ENCODE measurements at regions of chr3 and their contacts with region 1.

Region 1: GRCh38 chr3:160941885-160942494 is 163.2 kb downstream of the B3GALNT1 start:
- DNase-seq: peak; percentile 76
- H3K4me3 ChIP-seq: no peak overlapping the region
- H3K27ac ChIP-seq: no peak overlapping the region
- H3K4me1 ChIP-seq: peaks cover 0 to 3% (median 0%) of the 10 kb centered on the region in 4 donors
- H3K27me3 ChIP-seq: no peaks in the 10 kb centered on the region
- CTCF ChIP-seq: peak; percentile 82 to 93 (median 87)
- EP300 ChIP-seq: no peak
- POLR2A ChIP-seq: no peak

Region 2: GRCh38 chr3:160577556-160578195 is 364.3 kb before region 1 on chr3:
- in situ Hi-C with region 1: loop called in 1 of 4 experiments (anchors 25 kb)
- intact Hi-C with region 1: no loop called
- DNase-seq: no peak
- H3K4me3 ChIP-seq: no peak overlapping the region
- H3K27ac ChIP-seq: no peak overlapping the region
- H3K4me1 ChIP-seq: no peaks in the 10 kb centered on the region
- H3K27me3 ChIP-seq: no peaks in the 10 kb centered on the region
- CTCF ChIP-seq: no peak
- EP300 ChIP-seq: no peak
- POLR2A ChIP-seq: no peak

Region 3: GRCh38 chr3:160612386-160613075 is 329.5 kb before region 1 on chr3:
- in situ Hi-C with region 1: no loop called
- intact Hi-C with region 1: no loop called
- DNase-seq: no peak
- H3K4me3 ChIP-seq: no peak overlapping the region
- H3K27ac ChIP-seq: no peak overlapping the region
- H3K4me1 ChIP-seq: no peaks in the 10 kb centered on the region
- H3K27me3 ChIP-seq: no peaks in the 10 kb centered on the region
- CTCF ChIP-seq: no peak
- EP300 ChIP-seq: no peak
- POLR2A ChIP-seq: no peak

Region 4: GRCh38 chr3:160707187-160707794 is 234.7 kb before region 1 on chr3:
- in situ Hi-C with region 1: loop called (anchors 5 to 10 kb)
- intact Hi-C with region 1: loop called (anchors 5 kb)
- DNase-seq: peak; percentile 20
- H3K4me3 ChIP-seq: no peak overlapping the region
- H3K27ac ChIP-seq: no peak overlapping the region
- H3K4me1 ChIP-seq: no peaks in the 10 kb centered on the region
- H3K27me3 ChIP-seq: peaks cover 7% of the 10 kb centered on the region
- CTCF ChIP-seq: peak; percentile 49 to 62 (median 56)
- EP300 ChIP-seq: no peak
- POLR2A ChIP-seq: no peak

Region 5: DNA sequence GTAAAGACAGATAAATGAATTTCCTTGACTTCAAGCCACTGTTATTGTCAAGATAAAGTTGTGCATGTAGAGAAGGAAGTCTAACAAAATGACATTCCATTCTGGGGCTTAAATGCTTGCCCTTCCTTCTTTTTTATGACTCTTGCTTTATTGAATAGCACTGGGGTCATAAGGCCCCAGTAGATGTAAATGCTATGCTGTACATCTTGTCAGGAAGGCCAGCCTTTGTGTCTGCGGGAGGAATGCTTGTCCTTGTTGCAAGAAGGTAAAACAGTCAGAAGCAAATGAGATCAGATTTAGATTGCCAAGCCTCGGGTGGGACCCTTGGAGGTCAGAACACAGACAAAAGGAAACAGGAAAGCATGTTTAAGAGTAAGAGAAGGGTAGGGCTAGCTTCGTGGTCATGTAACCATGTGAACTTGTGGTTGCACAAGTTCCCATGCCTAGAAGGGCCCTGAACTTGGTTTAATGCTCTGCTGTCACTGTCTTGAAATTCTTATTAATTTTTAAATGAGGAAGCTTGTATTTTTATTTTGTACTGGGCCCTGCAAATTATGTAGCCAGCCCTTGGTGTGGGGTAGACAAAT is 104.5 kb before region 1 on chr3:
- in situ Hi-C with region 1: no loop called
- intact Hi-C with region 1: no loop called
- DNase-seq: peak; percentile 31
- H3K4me3 ChIP-seq: no peak overlapping the region
- H3K27ac ChIP-seq: peak overlapping the region in 3 of 4 donors; percentile 24 to 53 (median 43)
- H3K4me1 ChIP-seq: peaks cover 0 to 18% (median 4%) of the 10 kb centered on the region in 4 donors
- H3K27me3 ChIP-seq: no peaks in the 10 kb centered on the region
- CTCF ChIP-seq: no peak
- EP300 ChIP-seq: no peak
- POLR2A ChIP-seq: no peak

Measured in transverse colon (tissue), 4 donors.